ENCODE measurements at regions of chr11 and their contacts with region 1.

Region 1: DNA sequence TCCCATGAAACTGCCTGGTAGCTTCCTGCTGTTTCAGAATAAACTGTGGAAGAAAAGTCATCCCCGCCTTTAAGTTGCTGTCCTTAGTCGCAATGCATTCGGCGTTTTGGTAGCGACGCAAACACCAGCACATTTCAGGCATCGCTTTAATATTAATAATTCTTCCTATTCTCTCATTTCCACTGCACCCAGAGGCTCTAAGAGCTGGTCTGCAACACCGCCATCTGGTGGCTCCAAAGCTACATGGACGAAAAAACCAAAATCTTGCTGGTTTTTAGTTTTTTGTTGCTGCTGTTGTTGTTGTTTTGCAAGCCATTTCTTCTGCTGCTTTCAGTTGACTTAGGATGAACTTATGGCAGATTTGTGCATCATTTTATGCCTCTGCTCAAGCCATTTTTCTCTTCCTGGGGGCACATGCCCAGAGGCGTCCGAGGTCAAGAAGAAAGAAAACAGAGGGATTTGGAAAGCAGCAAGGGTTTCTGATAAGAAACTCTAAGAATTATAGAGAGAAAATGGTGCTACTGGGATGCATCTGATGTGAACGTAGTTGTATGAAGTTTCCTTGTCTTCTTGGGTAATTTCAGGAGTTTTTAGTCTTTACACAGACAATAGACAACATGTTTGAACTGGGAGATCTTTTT is 345.4 kb upstream of the KIRREL3 start:
- DNase-seq: peak; percentile 70
- H3K4me3 ChIP-seq: 0 out of 2 replicates have a peak overlapping the region, but pooled peaks have one; percentile 1
- H3K27ac ChIP-seq: no peak overlapping the region
- H3K4me1 ChIP-seq: no peaks in the 10 kb centered on the region
- H3K27me3 ChIP-seq: peaks cover 30% of the 10 kb centered on the region

Region 2: GRCh38 chr11:126440792-126441514 is 905.0 kb before region 1 on chr11:
- in situ Hi-C with region 1: loop called (anchors 25 kb)
- DNase-seq: peak; percentile 79
- H3K4me3 ChIP-seq: no peak overlapping the region
- H3K27ac ChIP-seq: no peak overlapping the region
- H3K4me1 ChIP-seq: no peaks in the 10 kb centered on the region
- H3K27me3 ChIP-seq: no peaks in the 10 kb centered on the region

Region 3: DNA sequence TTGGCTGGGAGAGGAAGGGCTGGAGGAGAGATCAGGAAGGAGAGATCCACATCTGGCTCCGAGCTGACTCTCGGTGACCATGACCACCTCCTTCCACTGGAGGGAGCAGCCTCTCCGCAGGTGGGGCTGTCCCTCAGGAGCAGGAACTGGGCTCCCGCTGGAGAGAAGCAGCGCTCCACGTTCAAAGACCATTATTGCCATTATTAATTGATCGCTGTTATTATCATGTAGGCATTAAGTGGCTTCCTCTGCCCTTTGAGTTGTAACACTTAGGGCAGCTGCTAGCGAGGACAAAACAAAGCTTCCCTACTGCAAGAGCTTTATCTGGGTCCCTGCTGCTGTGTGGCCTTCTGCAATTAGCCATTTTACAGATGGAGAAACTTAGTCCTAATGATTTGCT is 738.6 kb before region 1 on chr11:
- in situ Hi-C with region 1: loop called (anchors 25 kb)
- DNase-seq: peak; percentile 89
- H3K4me3 ChIP-seq: no peak overlapping the region
- H3K27ac ChIP-seq: no peak overlapping the region
- H3K4me1 ChIP-seq: 0 out of 2 replicates have a peak, but pooled peaks cover 4% of the 10 kb centered on the region
- H3K27me3 ChIP-seq: no peaks in the 10 kb centered on the region

Region 4: DNA sequence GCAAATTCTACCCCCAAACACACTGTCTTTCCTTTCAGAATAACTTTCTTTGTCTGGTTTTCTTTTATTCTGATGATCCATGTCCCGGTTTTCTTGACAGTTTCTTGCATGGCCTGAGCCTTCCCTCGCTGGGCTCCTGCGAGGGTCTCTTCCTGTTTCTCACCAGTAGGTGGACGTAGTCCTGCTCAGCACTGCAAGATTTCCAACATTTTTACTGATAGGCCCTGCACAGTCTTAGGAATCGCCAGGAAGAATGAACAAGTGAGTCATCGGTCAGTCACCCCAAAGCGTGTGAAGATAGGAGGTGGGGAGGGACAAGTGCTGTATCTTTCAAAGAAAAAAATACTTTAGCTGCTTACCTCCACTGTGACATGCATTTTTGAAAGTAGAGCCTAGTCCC is 328.5 kb before region 1 on chr11:
- in situ Hi-C with region 1: loop called (anchors 10 kb)
- DNase-seq: peak; percentile 90
- H3K4me3 ChIP-seq: no peak overlapping the region
- H3K27ac ChIP-seq: no peak overlapping the region
- H3K4me1 ChIP-seq: peaks cover 8% of the 10 kb centered on the region
- H3K27me3 ChIP-seq: peaks cover 9% of the 10 kb centered on the region; the same call in 1 of the 2 replicates

Region 5: DNA sequence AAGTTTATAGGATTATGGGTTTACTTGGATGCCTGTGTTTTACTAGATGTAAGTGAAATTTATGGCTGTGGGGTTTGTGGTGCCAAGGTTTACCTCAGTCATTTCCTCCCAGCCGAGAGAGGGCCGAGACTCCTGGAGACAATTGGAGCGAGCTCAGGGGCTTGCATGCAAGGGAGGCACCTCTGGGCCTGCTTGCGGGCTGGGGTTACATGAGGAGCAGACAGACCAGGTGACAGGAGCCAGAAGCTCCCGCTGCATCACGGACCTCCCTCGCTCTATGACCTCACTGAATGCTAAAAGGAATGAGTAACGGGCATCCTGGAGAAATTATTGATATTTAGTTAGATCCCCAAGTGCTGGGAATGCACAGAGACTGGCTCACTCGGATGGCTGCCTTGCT is 70.2 kb before region 1 on chr11:
- in situ Hi-C with region 1: no loop called
- DNase-seq: no peak
- H3K4me3 ChIP-seq: no peak overlapping the region
- H3K27ac ChIP-seq: no peak overlapping the region
- H3K4me1 ChIP-seq: no peaks in the 10 kb centered on the region
- H3K27me3 ChIP-seq: no peaks in the 10 kb centered on the region; the same call in 1 of the 2 replicates